AG04449 (cell line): ENCODE measurements at regions of chr2 and their contacts with region 1.

Region 1: GRCh38 chr2:64330281-64331113 is 123.5 kb upstream of the LGALSL start:
- DNase-seq: peak; percentile 46
- H3K4me3 ChIP-seq: peak overlapping the region; percentile 52
- CTCF ChIP-seq: peak; percentile 83

Region 2: GRCh38 chr2:64052468-64053241 is 277.8 kb before region 1 on chr2:
- CTCF ChIA-PET with region 1: interaction called, 272 read pairs
- POLR2A ChIA-PET with region 1: no interaction called
- DNase-seq: no peak
- H3K4me3 ChIP-seq: no peak overlapping the region
- CTCF ChIP-seq: no peak

Region 3: DNA sequence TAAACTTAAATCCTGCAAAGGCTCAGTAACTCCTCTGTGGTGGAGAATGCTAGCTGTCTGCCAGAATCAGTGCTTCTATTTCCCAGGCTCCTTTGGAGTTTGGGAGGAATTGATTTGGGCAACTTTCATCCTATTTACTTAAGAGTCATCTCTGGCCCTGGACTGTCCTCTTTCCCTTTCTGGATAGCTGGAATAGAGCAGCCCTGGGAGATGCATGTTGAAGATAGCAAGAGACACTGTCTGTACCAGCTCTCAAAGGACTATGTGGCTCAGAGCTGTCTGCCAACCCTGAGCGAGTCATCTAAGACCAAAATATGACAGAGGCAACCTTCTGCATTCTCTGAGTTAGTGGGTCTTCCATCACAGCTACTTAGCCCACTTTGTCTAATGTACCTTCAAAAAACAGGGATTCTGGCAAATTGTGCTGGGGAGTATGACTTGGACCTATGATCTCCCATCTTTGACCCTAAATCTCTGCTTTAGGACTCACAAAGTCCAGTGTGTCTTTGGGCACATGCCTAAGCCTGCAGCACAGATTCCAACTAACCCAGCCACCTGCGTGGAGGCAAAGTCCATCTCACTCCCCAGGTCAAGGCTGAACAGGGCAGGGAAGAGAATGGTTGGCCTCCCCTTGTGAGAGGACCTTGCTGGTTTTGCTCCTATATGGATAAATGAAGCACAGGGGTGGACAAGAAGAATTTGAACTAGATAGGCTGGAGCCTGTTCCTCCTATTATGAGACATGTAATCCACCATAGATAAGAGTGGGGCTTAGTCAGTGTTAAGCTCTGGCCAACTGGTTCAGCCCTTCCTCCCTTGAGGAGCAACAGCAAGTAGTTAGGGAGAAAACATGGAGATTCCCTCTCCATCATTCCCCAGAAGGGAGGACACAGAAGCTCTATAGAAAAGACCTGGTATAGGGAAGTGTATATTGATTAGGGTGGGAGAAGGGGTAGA is 87.1 kb before region 1 on chr2:
- CTCF ChIA-PET with region 1: no interaction called
- POLR2A ChIA-PET with region 1: no interaction called
- DNase-seq: no peak
- H3K4me3 ChIP-seq: no peak overlapping the region
- CTCF ChIP-seq: no peak

Region 4: GRCh38 chr2:64354857-64355680 is 24.6 kb after region 1 on chr2:
- CTCF ChIA-PET with region 1: interaction called, 103 read pairs
- POLR2A ChIA-PET with region 1: interaction called, 3 read pairs
- DNase-seq: peak; percentile 24
- H3K4me3 ChIP-seq: no peak overlapping the region
- CTCF ChIP-seq: no peak

Region 5: GRCh38 chr2:64488050-64488974 is 157.8 kb after region 1 on chr2:
- CTCF ChIA-PET with region 1: interaction called, 315 read pairs
- POLR2A ChIA-PET with region 1: no interaction called
- DNase-seq: no peak
- H3K4me3 ChIP-seq: no peak overlapping the region
- CTCF ChIP-seq: peak; percentile 83

Region 6: DNA sequence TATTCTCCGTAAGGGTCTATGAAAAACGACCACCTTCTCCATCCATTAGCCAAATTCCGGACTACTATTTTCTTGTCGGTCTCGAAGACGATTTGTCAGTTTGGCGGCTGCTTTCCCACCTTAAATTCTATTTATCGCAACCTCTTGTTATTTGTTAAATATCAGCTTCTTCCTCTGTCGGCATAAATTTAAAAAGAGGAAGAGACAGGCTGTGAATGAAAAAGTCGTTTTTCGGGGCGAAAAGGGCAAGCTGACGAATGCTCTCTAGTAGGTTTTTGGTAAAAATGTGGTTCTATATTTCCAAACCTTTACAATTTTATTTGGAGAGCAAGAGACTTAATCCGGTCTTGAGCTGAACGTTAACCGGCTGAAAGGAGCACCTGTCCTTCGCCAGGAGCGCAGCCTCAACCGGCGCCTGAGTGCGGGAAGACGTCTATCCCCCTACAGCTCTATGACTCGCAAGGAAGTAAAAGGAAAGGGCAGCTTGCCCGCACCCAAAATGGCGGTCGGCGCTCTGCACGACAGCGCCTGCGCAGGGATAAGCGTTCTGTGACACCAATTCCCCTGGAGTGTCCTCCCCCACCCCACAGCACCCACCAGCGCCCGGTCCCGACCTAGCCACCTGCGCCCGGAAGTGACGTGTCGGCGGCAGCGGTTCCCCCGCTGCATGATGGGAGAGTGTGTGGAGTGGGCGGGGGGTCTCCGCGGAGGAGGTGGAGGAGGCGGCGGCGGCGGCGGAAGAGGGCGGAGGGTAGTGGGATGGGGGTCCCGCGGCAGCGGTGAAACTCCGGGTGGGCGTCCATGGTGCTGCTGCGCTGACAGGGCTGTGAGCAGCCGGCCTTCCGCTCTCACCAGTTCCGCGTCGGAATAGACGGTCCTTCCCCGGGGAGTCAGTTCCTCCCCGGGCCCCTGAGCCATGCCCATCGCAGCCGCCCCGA is 193.4 kb after region 1 on chr2 and contains the start of gene AFTPH:
- CTCF ChIA-PET with region 1: interaction called, 100 read pairs
- POLR2A ChIA-PET with region 1: interaction called, 5 read pairs
- DNase-seq: peak; percentile 87
- H3K4me3 ChIP-seq: peak within 1 kb of the TSS; percentile 91
- CTCF ChIP-seq: no peak

Region 7: GRCh38 chr2:64562148-64562784 is 231.8 kb after region 1 on chr2:
- CTCF ChIA-PET with region 1: interaction called, 194 read pairs
- POLR2A ChIA-PET with region 1: no interaction called
- DNase-seq: no peak
- H3K4me3 ChIP-seq: no peak overlapping the region
- CTCF ChIP-seq: peak; percentile 15

Region 8: DNA sequence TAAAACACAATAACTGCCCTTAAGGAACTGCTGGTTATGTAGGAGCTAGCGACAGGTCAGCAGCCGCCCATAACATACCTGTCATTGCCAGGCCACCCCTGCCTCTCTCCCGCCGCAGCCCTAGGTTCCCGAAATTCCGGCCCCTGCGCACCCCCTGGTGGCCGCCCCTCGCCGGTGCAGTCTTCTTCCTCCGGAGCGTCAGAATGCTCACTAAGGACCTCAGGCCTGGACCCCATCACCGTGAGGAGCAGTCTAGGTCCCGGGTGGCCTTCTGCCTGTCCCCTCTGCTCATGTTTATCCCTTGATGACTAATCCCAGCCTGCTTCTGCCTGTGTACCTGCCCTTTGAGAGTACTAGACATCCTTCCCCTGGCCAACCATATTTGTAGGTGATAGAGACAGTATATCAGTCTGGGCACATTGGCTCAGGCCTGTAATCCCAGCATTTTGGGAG is 543.0 kb after region 1 on chr2:
- CTCF ChIA-PET with region 1: interaction called, 15 read pairs
- POLR2A ChIA-PET with region 1: no interaction called
- DNase-seq: no peak
- H3K4me3 ChIP-seq: no peak overlapping the region; the same call in 1 of the 2 replicates
- CTCF ChIP-seq: peak; percentile 97